A549 (cell line): ENCODE measurements at regions of chr12 and their contacts with region 1.

Region 1: DNA sequence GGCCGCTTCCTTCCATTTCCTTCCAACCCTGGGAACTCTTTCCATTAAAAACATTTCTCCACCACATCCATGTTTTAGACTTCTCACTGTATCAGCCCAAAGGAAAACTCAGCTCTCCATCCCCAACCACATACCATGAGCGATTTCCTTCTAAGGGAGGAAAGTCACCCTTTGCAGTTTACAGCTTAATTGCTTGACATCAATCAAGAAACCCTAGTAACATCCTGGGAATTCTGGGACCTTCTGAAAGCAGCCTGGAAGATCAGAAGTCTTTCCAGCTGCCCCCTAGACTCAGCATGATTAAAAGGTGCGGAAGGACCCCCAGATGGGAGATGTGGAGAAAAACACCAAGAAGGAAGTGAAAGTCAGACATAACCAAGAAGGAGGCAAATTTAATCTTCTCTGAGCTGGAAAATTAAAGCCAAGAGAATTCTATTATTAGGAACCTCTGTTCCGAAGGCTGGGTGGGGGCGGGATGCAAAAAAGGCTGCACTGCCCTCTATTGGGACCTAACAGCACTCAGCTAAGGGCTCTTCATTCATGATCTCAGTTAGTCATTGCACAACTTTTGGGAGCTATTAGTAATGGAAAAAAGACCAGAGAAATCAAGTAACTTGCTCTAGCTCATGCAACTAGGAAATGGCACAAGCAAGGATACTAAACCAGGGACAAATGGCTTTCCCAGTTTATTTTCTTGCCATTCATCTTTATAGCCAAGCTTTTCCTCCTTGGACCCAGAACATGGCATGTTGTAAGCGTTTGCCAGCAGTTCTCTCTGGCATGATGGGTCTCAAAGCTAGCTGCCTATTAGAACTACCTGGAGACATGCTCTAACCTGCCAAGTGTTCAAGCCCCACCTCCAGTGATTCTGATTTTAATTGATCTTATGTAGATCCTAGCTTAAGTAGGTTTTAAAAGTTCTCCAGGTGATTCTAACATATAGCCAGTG is 73.1 kb upstream of the PLXNC1 start:
- DNase-seq: peak; percentile 64 to 66
- ATAC-seq: peak; percentile 82 to 92
- H3K4me3 ChIP-seq: no peak overlapping the region
- H3K27ac ChIP-seq: peak overlapping the region in 1 of 2 experiments; percentile 62; a peak in 3 of 6 replicates
- H3K4me1 ChIP-seq: peaks cover 3% of the 10 kb centered on the region; the same call in 1 of the 3 replicates
- CTCF ChIP-seq: peak; percentile 51
- EP300 ChIP-seq: no peak
- POLR2A ChIP-seq: no peak
- RAD21 ChIP-seq: peak; percentile 64 to 70

Region 2: GRCh38 chr12:93742110-93742934 is 332.9 kb before region 1 on chr12:
- CTCF ChIA-PET with region 1: no interaction called
- POLR2A ChIA-PET with region 1: no interaction called
- DNase-seq: peak; percentile 71 to 81
- ATAC-seq: peak; percentile 98
- H3K4me3 ChIP-seq: peak overlapping the region; percentile 59
- H3K27ac ChIP-seq: peak overlapping the region; percentile 73 to 87
- H3K4me1 ChIP-seq: peaks cover 21% of the 10 kb centered on the region
- CTCF ChIP-seq: peak; percentile 88
- EP300 ChIP-seq: no peak
- POLR2A ChIP-seq: no peak
- RAD21 ChIP-seq: peak; percentile 36 to 80

Region 3: DNA sequence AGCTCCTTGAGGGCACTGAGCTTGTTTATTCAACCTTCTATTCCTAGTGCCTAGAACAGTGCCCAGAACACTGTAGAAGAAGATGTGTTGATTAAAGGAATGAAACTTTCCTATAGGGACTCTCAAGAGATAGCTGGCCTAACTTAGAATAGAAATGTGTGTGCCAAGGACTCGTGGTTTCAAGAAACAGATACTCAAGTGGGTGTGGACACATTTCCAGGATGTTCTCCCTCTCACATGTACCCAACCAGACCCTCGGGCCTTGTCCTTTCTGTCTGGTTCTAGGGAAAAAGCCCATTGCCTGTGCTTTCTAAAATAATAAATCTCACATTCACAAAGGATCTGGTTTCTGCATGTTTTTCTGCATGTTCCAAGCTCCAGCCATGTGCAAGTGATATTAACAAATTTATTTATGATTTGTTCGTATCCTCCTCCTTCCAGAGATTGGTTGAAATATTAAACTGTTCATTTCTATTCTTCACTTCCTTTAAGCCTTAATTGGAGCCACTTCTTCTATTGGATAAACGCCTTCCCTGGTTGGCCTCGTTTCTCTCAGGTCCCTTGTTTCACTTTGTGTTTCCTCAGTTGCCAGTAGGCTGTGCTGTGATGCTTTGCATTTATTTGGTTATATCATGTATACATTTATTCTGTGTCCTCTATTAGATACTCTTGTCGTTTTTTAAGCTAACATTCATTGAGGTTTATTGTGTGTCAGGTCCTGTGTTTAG is 308.3 kb before region 1 on chr12:
- CTCF ChIA-PET with region 1: interaction called, 14 read pairs
- POLR2A ChIA-PET with region 1: no interaction called
- DNase-seq: peak; percentile 53 to 66
- ATAC-seq: peak; percentile 83 to 93
- H3K4me3 ChIP-seq: no peak overlapping the region
- H3K27ac ChIP-seq: peak overlapping the region; percentile 29 to 58; a peak in 4 of 6 replicates
- H3K4me1 ChIP-seq: peaks cover 15% of the 10 kb centered on the region
- CTCF ChIP-seq: peak; percentile 82
- EP300 ChIP-seq: no peak
- POLR2A ChIP-seq: no peak
- RAD21 ChIP-seq: peak; percentile 89 to 95

Region 4: DNA sequence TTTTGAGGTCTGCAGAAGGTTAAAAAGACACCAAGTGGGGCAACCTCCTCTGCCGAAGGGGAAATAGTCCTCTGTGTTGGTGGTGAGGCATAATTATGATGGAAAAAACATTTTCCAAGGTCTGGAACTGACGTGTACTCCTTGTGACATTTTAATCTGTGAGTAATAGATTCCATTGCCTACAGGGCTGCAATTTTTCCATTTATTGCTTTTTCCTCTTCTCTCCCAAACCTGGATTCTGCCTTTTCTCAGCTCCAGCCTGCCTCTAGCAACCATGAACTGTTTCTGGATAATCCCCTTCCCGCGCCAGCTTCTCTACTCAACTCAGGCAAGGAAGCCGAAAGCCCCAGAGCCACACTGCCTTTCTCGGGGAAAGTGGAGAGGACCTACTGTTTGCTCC is 157.0 kb before region 1 on chr12:
- CTCF ChIA-PET with region 1: no interaction called
- POLR2A ChIA-PET with region 1: interaction called, 11 read pairs
- DNase-seq: peak in 1 of 2 experiments; percentile 44
- ATAC-seq: peak; percentile 35 to 71; a peak in 5 of 6 replicates
- H3K4me3 ChIP-seq: no peak overlapping the region
- H3K27ac ChIP-seq: peak overlapping the region; percentile 59 to 67
- H3K4me1 ChIP-seq: peaks cover 39% of the 10 kb centered on the region
- CTCF ChIP-seq: no peak
- EP300 ChIP-seq: no peak
- POLR2A ChIP-seq: no peak
- RAD21 ChIP-seq: no peak